Right ventricle myocardium inferior (tissue), 1 donor: ENCODE measurements at regions of chr22 and their contacts with region 1.

Region 1: GRCh38 chr22:29689880-29690213 is 30.0 kb upstream of the CABP7 start:
- DNase-seq: no peak
- ATAC-seq: peak; percentile 40

Region 2: DNA sequence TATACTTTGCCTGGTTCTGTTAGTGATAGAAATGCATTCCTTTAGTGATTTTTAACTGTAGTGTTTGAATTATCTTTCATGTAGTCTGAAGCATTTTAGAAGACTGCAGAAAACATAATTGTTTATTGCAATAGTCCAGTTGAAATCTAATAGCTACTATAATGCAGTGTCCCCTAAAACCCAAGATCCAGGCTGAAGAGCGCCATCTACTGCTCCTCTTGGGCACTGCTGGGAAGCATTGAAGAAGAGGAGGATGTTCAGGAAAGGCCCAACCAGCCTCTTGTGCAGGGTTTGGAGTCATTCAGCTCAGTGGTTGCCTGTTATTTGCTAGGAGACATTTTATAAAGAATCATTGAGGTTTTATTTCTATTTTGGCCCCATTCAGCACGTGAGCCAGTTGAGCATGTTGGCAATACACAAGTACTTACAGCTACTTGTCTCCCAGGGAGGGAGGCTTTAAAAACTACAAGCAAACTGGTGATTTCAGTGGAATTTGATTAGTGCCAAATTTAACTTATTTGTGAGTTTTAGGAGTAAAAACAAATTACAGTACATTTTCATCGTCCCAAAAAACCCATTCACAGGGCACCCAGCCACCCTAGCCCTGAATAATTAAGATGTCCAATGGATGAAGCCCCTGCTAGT is 315.5 kb after region 1 on chr22:
- intact Hi-C with region 1: loop called (anchors 10 kb)
- DNase-seq: no peak
- ATAC-seq: peak; percentile 84

Region 3: DNA sequence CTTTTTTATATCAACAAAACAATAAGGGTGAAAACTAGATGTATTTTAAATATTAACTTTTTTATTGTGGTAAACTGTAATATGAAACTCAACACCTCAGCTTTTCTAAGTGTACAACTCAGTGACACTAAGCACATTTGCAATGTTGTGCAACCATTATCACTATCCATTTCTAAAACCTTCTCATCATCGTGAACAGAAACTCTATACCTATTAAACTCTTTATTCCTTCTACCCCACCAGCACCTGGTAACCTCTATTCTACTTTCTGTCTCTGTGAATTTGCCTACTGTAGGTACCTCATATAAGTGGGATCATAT is 399.8 kb after region 1 on chr22:
- intact Hi-C with region 1: loop called (anchors 2 kb)
- DNase-seq: no peak
- ATAC-seq: no peak